GM12878 (cell line): ENCODE measurements at regions of chr1 and their contacts with region 1.

Region 1: DNA sequence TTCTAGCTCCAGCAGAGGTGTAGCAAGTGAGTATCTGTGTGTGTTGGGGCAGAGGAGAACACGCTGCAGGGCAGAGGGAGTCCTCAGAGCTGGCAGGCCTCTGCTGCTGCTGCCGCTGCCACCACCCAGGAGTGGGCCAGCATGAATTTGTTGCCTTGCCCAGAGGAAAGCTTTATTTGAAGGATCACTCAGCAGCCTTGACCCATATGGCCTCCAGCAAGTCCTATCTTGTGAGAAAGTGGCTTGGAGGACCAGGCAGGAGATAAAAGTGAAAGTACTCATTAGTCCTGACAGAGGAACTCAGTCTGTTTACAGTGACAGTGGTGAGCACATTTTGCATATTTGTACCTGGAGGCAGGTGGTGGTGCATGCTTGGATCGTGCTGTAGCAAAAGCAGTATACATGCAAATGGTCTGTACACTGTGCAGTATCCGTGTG is 3.1 kb downstream of the TRAF5 start:
- DNase-seq: no peak
- ATAC-seq: peak; percentile 50
- H3K4me3 ChIP-seq: peak overlapping the region; percentile 65
- H3K27ac ChIP-seq: peak overlapping the region; percentile 81
- H3K4me1 ChIP-seq: peaks cover 51% of the 10 kb centered on the region
- H3K27me3 ChIP-seq: no peaks in the 10 kb centered on the region
- CTCF ChIP-seq: no peak
- EP300 ChIP-seq: no peak
- POLR2A ChIP-seq: no peak
- RAD21 ChIP-seq: no peak

Region 2: GRCh38 chr1:211382714-211383480 is 53.1 kb after region 1 on chr1:
- CTCF ChIA-PET with region 1: interaction called, 13 read pairs
- POLR2A ChIA-PET with region 1: interaction called, 9 read pairs
- RAD21 ChIA-PET with region 1: interaction called, 5 read pairs
- SMC1A ChIA-PET with region 1: interaction called, 12 read pairs
- in situ Hi-C with region 1: no loop called
- intact Hi-C with region 1: loop called (anchors 2 kb)
- DNase-seq: peak; percentile 80
- ATAC-seq: peak; percentile 98
- H3K4me3 ChIP-seq: peak overlapping the region; percentile 76
- H3K27ac ChIP-seq: peak overlapping the region; percentile 95
- H3K4me1 ChIP-seq: peaks cover 4% of the 10 kb centered on the region; the same call in 1 of the 2 replicates
- H3K27me3 ChIP-seq: no peaks in the 10 kb centered on the region
- CTCF ChIP-seq: no peak
- EP300 ChIP-seq: no peak; a peak in 1 of 4 replicates
- POLR2A ChIP-seq: peak; percentile 98
- RAD21 ChIP-seq: no peak